ENCODE measurements at regions of chr17 and their contacts with region 1.

Region 1: DNA sequence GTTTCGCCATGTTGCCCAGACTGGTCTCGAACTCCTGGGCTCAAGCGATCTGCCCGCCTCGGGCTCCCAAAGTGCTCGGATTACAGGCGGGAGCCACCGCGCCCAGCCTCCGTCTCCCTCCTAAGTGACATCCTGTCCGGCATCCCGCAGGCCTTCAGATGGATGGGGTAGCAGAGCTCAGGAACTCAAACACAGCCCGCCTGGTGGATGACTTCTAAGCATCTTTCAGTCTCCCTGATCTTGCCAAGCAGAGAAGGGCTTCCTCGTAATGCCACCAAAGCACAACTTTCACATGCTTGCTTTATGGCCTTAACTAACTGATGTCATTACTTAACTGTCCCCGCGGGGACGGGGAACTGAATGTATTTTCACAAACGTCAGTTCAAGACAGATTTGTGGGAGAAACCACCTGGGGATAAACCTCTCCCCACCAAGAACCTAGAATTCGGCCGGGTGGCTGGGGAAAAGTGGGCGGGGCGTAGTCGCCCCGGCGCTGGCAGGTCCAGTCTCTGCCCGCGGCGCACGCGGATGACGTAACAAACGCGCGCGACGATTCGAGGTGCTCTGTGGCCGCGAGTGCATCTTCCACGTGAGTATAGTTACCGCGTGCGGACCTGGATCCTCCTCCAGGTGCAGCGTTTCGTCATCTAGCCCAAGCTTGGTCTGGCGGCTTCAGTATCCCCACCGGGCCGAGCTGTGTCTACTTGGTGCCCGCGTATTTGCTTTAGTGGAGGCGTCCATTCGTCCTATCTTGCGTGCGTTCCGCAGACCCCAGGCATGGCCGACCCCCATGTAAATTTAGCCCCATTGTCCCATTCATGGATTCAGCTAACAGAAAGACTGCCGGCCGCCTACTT is at the start of gene PFAS:
- DNase-seq: peak; percentile 98
- ATAC-seq: peak; percentile 57
- H3K4me3 Mint-ChIP-seq: peak within 1 kb of the TSS; percentile 94
- H3K27ac Mint-ChIP-seq: peak within 1 kb of the TSS; percentile 98
- H3K4me1 Mint-ChIP-seq: peaks cover 36% of the 10 kb centered on the region
- H3K27me3 Mint-ChIP-seq: no peaks in the 10 kb centered on the region
- total RNA-seq, gene PFAS: 113 to 141 TPM

Region 2: GRCh38 chr17:7887482-7888183 is 361.3 kb before region 1 on chr17:
- CTCF ChIA-PET with region 1: no interaction called
- POLR2A ChIA-PET with region 1: no interaction called
- intact Hi-C with region 1: loop called (anchors 1 to 2 kb)
- DNase-seq: peak; percentile 94
- ATAC-seq: peak; percentile 79
- H3K4me3 Mint-ChIP-seq: no peak overlapping the region
- H3K27ac Mint-ChIP-seq: no peak overlapping the region
- H3K4me1 Mint-ChIP-seq: peaks cover 4% of the 10 kb centered on the region
- H3K27me3 Mint-ChIP-seq: no peaks in the 10 kb centered on the region

Region 3: GRCh38 chr17:8156246-8156992 is 92.6 kb before region 1 on chr17:
- CTCF ChIA-PET with region 1: no interaction called
- POLR2A ChIA-PET with region 1: interaction called, 8 read pairs
- intact Hi-C with region 1: loop called in 1 of 2 experiments (anchors 1 kb)
- DNase-seq: peak; percentile 100
- ATAC-seq: peak; percentile 75
- H3K4me3 Mint-ChIP-seq: no peak overlapping the region
- H3K27ac Mint-ChIP-seq: no peak overlapping the region
- H3K4me1 Mint-ChIP-seq: peaks cover 49% of the 10 kb centered on the region
- H3K27me3 Mint-ChIP-seq: no peaks in the 10 kb centered on the region

Region 4: GRCh38 chr17:8189711-8190477 is 59.1 kb before region 1 on chr17 and contains the start of gene BORCS6:
- CTCF ChIA-PET with region 1: interaction called, 4 read pairs
- POLR2A ChIA-PET with region 1: interaction called, 5 read pairs
- intact Hi-C with region 1: loop called (anchors 1 kb)
- DNase-seq: peak; percentile 98
- ATAC-seq: peak; percentile 67
- H3K4me3 Mint-ChIP-seq: no peak within 1 kb of the TSS
- H3K27ac Mint-ChIP-seq: peak within 1 kb of the TSS; percentile 86
- H3K4me1 Mint-ChIP-seq: peaks cover 10% of the 10 kb centered on the region
- H3K27me3 Mint-ChIP-seq: no peaks in the 10 kb centered on the region
- total RNA-seq, gene BORCS6: 3.9 to 4.5 TPM

Region 5: GRCh38 chr17:8288336-8289102 is 39.5 kb after region 1 on chr17 and contains the start of gene RANGRF:
- CTCF ChIA-PET with region 1: no interaction called
- POLR2A ChIA-PET with region 1: interaction called, 5 read pairs
- intact Hi-C with region 1: loop called (anchors 1 kb)
- DNase-seq: peak; percentile 91
- ATAC-seq: peak; percentile 94
- H3K4me3 Mint-ChIP-seq: peak within 1 kb of the TSS; percentile 84
- H3K27ac Mint-ChIP-seq: peak within 1 kb of the TSS; percentile 93
- H3K4me1 Mint-ChIP-seq: peaks cover 20% of the 10 kb centered on the region
- H3K27me3 Mint-ChIP-seq: no peaks in the 10 kb centered on the region
- total RNA-seq, gene RANGRF: 37.9 to 40.1 TPM

Region 6: DNA sequence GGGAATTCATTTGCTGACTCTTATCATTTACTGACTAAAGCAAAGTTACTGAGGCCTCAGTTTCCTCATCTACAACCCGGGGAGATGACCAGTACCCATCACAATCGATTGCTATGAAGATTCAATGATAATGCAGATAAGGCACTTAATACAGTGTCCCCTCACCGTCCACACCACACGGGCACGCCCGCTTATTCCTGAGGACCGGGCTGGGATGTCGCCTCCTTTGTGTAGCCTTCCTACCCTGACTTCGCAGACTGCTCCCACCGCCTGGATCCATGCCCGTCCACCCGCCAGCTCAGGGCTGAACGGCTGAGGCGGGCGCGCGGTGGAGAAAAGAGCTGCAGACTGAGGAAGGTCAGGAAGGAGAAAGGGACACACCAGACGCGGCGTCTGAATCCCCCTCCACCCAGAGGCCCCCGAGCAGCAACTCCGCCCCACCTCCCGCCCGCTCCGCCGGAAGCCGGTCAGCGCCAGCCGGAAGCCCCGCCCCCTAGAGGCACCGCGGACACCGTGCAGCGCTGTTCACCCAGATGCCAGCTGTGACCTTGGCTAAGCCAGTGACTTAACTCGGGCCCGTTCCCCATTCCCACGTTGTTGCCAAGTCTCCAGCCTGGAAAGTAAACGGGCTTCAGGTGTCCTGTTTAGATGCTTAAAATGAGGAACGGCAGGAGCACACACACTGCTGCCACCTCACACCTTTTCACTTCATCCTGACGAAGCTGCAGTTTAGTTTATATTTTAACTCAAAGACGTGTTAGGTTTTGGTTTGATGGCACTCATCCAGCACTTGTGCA is 127.5 kb after region 1 on chr17 and contains the start of gene KRABD2:
- CTCF ChIA-PET with region 1: interaction called, 4 read pairs
- POLR2A ChIA-PET with region 1: no interaction called
- intact Hi-C with region 1: loop called (anchors 1 to 5 kb)
- DNase-seq: peak; percentile 95
- ATAC-seq: peak; percentile 99
- H3K4me3 Mint-ChIP-seq: peak within 1 kb of the TSS; percentile 81
- H3K27ac Mint-ChIP-seq: peak within 1 kb of the TSS; percentile 87
- H3K4me1 Mint-ChIP-seq: peaks cover 55% of the 10 kb centered on the region
- H3K27me3 Mint-ChIP-seq: no peaks in the 10 kb centered on the region

Region 7: GRCh38 chr17:8630802-8631553 is 382.0 kb after region 1 on chr17:
- CTCF ChIA-PET with region 1: no interaction called
- POLR2A ChIA-PET with region 1: no interaction called
- intact Hi-C with region 1: loop called in 1 of 2 experiments (anchors 2 kb)
- DNase-seq: peak; percentile 96
- ATAC-seq: peak; percentile 98
- H3K4me3 Mint-ChIP-seq: peak overlapping the region; percentile 87
- H3K27ac Mint-ChIP-seq: no peak overlapping the region
- H3K4me1 Mint-ChIP-seq: peaks cover 4% of the 10 kb centered on the region
- H3K27me3 Mint-ChIP-seq: peaks cover 33% of the 10 kb centered on the region

Region 8: DNA sequence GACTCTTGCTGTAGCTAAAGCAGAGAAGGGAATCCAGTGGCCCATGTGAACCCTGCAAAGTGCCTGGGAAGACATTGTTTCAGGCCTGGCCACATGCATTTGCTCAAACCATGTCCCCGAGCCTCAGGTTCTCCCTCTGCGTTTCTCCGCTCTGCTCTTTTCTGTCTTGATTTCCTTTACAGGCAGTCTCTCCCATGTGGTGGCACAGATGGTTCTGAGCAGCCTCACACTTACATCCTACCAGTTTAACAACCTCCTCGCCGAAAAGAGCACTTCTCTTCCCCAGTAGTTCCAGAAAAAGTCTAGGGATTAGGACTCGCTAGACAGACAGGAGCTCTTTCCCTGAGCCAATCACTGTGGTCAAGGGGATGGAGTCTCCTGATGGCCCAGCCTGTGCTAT is 409.8 kb after region 1 on chr17:
- CTCF ChIA-PET with region 1: no interaction called
- POLR2A ChIA-PET with region 1: no interaction called
- intact Hi-C with region 1: no loop called
- DNase-seq: no peak
- ATAC-seq: no peak
- H3K4me3 Mint-ChIP-seq: no peak overlapping the region
- H3K27ac Mint-ChIP-seq: peak overlapping the region; percentile 25
- H3K4me1 Mint-ChIP-seq: no peaks in the 10 kb centered on the region
- H3K27me3 Mint-ChIP-seq: peaks cover 11% of the 10 kb centered on the region

Measured in activated CD4-positive, alpha-beta T cell treated with anti-CD3 and anti-CD28 coated beads for 36 hours (primary cell).